ENCODE measurements at regions of chr11 and their contacts with region 1.

Region 1: GRCh38 chr11:3854977-3855807 is at the start of gene STIM1:
- DNase-seq: peak; percentile 93 to 95
- ATAC-seq: peak; percentile 84
- total RNA-seq, gene STIM1: 64.7 to 65.4 TPM

Region 2: DNA sequence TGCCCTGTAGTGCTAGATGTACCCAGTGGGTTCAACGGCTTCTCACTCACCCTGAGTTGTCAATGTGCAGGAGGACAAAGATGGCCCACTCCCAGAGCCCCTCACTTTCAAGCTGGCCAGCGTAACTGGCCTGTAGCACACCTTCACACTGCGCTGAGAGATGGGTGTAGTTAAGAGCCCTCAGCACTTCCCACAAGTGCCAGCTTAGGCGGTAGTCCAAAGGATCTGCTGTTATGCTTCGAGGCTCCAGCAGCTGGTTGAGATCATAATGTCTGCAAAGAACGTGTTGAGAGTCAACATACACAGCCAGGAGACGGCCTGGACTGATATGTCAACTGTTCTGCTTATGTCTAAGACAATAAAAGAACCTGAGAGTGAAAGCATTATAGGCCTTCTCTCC is 169.3 kb before region 1 on chr11:
- intact Hi-C with region 1: no loop called
- DNase-seq: no peak
- ATAC-seq: peak; percentile 60

Region 3: GRCh38 chr11:4065601-4066377 is 210.6 kb after region 1 on chr11:
- intact Hi-C with region 1: loop called in 1 of 2 experiments (anchors 10 kb)
- DNase-seq: no peak
- ATAC-seq: no peak

Region 4: DNA sequence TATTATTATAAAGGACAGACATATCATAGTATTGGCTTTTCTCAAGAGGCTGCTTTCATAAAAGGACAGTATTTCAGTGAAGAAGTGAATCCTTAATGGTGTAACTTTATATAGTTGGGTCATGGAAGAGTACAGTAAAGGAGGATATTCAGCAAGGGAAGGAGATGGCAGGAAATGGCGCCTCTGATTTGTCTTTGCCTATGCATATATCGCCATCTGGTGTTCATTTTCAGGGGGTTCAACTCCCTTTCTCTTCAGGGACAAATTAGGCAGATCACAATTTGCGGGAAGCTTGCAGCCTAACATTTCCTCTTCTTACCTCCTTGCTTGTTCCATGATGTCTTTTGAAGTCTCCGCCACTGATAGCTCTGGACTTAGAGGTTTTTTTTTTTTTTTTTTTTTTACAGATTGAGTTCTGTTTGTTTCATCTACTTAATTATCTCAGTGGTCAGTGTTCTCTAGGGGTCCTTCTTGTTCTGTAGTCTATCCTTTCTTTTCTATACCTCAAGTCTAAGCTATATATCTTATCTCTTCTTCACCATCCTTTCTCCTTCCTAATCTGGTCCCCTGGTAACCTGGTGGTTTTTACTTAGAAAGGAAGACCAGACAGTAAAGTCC is 217.6 kb after region 1 on chr11:
- intact Hi-C with region 1: loop called (anchors 2 to 10 kb)
- DNase-seq: peak in 1 of 2 donors; percentile 34
- ATAC-seq: peak; percentile 92

Measured in left colon (tissue), 2 donors.